ENCODE measurements at regions of chr4 and their contacts with region 1.

Region 1: GRCh38 chr4:26709246-26709645 is 125.4 kb downstream of the TBC1D19 start:
- DNase-seq: peak; percentile 66
- H3K4me3 ChIP-seq: no peak overlapping the region
- H3K27ac ChIP-seq: no peak overlapping the region
- H3K4me1 ChIP-seq: peaks cover 8% of the 10 kb centered on the region
- H3K27me3 ChIP-seq: no peaks in the 10 kb centered on the region
- CTCF ChIP-seq: no peak
- POLR2A ChIP-seq: no peak

Region 2: DNA sequence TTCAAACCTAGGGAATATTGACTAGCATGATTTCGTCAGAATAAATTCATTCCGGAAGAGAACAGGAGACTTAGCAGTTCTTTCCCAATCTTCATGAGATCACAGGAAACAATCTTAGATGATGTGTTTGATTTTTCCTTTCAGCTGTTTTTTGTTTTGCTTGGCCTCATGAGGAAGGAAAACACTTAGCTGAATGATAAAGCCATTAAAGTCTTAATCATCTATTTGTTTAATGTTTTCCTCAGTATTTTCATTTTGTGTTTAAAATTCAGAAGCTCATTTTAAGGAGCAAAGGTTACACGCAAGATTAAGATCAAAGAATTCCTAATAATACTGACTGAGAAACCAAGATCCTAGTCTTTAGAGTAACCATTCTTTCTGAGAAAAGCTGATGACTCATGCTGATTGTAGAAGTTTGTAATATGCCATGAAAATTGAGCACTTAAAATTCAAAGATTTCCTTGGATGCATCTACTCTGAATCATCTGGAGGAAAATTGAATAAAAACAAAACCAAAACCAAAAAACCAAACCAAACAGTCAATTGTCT is 140.7 kb before region 1 on chr4:
- CTCF ChIA-PET with region 1: no interaction called
- POLR2A ChIA-PET with region 1: no interaction called
- dilution Hi-C with region 1: no loop called
- intact Hi-C with region 1: loop called (anchors 2 kb)
- DNase-seq: peak; percentile 77
- H3K4me3 ChIP-seq: no peak overlapping the region
- H3K27ac ChIP-seq: no peak overlapping the region
- H3K4me1 ChIP-seq: peaks cover 24% of the 10 kb centered on the region
- H3K27me3 ChIP-seq: peaks cover 10% of the 10 kb centered on the region in 2 experiments
- CTCF ChIP-seq: no peak
- POLR2A ChIP-seq: no peak

Region 3: DNA sequence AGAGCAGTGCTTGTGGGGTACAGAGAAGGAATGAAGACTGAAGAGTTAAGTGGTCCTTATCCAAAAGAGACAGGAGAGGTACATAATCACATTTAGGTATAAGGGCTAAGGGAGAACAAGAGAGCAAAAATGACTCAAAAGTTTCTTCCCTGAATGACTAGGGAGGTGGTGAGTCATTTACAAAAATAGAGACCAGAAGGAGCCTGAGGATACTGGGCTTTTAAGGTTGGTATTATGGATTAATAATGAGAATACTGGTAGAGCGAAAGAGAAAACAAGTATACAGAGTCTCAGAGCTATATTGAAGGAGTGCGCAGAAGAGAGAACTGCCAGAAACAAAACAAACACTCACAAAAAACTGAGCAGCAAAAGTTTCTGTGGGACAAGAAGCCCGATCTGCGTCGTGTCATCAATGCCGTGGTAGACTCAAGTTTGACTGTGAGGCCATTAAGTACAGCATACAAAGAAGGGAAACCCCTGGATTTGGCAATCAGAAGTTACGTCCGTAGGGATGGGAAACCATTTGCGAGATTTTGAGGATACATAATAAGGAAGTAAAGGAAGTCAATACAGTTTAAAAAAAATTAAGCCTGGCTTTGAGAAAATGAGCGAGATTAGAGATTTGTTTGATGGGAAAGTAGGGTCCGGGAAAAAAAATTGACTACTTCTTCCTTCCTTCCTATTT is 22.2 kb after region 1 on chr4:
- CTCF ChIA-PET with region 1: no interaction called
- POLR2A ChIA-PET with region 1: no interaction called
- dilution Hi-C with region 1: no loop called
- intact Hi-C with region 1: no loop called
- DNase-seq: no peak
- H3K4me3 ChIP-seq: no peak overlapping the region
- H3K27ac ChIP-seq: no peak overlapping the region
- H3K4me1 ChIP-seq: no peaks in the 10 kb centered on the region
- H3K27me3 ChIP-seq: no peaks in the 10 kb centered on the region
- CTCF ChIP-seq: no peak
- POLR2A ChIP-seq: no peak

Region 4: DNA sequence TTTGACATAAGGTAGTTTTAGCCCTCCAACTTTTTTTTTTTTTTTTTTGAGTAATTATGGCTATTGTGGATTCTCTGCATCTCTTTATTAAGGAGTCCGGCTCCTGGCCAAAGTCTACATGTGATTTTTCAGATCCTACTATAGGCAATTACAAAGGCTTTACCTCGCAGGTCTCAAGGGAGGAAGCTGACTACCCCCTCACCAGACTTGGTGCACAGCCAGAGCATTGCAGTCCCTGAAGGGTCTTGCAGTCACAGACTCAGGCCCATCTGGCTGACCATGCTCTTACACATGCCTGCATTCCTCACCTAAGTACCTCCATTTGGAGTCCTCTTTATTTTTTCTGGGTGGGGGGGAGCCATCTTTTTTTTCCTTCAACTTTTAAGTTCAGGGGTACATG is 62.9 kb after region 1 on chr4:
- CTCF ChIA-PET with region 1: no interaction called
- POLR2A ChIA-PET with region 1: no interaction called
- dilution Hi-C with region 1: no loop called
- intact Hi-C with region 1: no loop called
- DNase-seq: no peak
- H3K4me3 ChIP-seq: no peak overlapping the region
- H3K27ac ChIP-seq: no peak overlapping the region
- H3K4me1 ChIP-seq: no peaks in the 10 kb centered on the region
- H3K27me3 ChIP-seq: no peaks in the 10 kb centered on the region
- CTCF ChIP-seq: no peak
- POLR2A ChIP-seq: no peak